Activated CD4-positive, alpha-beta memory T cell treated with anti-CD3 and anti-CD28 coated beads, Interleukin-2, amount 10 ng/mL, durations not matched to agents 7 days and 5 days (primary cell): ENCODE measurements at regions of chr20 and their contacts with region 1.

Region 1: GRCh38 chr20:51372176-51372803 is 170.2 kb downstream of the NFATC2 start:
- DNase-seq: peak; percentile 66
- H3K4me3 Mint-ChIP-seq: no peak overlapping the region
- H3K27ac Mint-ChIP-seq: no peak overlapping the region
- H3K4me1 Mint-ChIP-seq: peaks cover 18% of the 10 kb centered on the region
- H3K27me3 Mint-ChIP-seq: no peaks in the 10 kb centered on the region

Region 2: GRCh38 chr20:51233345-51233744 is 138.9 kb before region 1 on chr20:
- CTCF ChIA-PET with region 1: no interaction called
- POLR2A ChIA-PET with region 1: no interaction called
- DNase-seq: no peak
- H3K4me3 Mint-ChIP-seq: no peak overlapping the region
- H3K27ac Mint-ChIP-seq: no peak overlapping the region
- H3K4me1 Mint-ChIP-seq: no peaks in the 10 kb centered on the region
- H3K27me3 Mint-ChIP-seq: peaks cover 25% of the 10 kb centered on the region

Region 3: DNA sequence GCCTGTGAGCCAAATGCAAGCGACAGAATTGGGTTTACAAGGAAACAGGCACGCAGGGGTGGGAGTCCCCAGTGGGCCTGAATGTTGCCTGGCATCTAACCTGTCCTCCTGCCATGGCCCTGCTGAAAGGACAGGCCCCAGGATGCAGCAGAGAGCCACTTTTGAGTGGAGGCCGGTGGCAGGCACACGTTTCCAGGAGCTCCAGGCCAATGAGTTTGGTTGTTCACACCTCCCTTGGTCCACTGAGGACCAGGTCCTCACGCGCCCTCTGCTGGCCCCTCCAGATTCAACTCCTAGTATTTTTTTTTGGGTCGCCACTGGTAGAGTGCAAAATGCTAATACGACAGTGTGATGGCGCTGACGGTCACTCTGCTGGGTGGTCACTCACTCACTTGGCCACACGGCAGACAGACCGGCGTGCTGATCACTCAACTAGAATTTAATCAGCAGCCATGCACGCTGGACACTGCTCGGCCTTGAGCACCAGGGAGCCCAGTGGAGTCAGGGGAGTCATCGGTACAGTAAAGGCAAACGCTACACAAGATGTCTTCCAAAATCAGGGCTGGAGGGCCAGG is 252.0 kb after region 1 on chr20:
- CTCF ChIA-PET with region 1: interaction called, 10 read pairs
- POLR2A ChIA-PET with region 1: no interaction called
- DNase-seq: peak; percentile 76
- H3K4me3 Mint-ChIP-seq: no peak overlapping the region
- H3K27ac Mint-ChIP-seq: no peak overlapping the region
- H3K4me1 Mint-ChIP-seq: peaks cover 24% of the 10 kb centered on the region
- H3K27me3 Mint-ChIP-seq: no peaks in the 10 kb centered on the region